A673 (cell line): ENCODE measurements at regions of chr6 and their contacts with region 1.

Region 1: GRCh38 chr6:44002593-44003344 is 124.5 kb downstream of the MRPL14 start:
- DNase-seq: peak; percentile 88
- H3K4me3 ChIP-seq: peak overlapping the region; percentile 39
- H3K27ac ChIP-seq: peak overlapping the region; percentile 92
- H3K4me1 ChIP-seq: peaks cover 83% of the 10 kb centered on the region
- H3K27me3 ChIP-seq: no peaks in the 10 kb centered on the region
- CTCF ChIP-seq: no peak; the same call in 1 of the 2 replicates

Region 2: DNA sequence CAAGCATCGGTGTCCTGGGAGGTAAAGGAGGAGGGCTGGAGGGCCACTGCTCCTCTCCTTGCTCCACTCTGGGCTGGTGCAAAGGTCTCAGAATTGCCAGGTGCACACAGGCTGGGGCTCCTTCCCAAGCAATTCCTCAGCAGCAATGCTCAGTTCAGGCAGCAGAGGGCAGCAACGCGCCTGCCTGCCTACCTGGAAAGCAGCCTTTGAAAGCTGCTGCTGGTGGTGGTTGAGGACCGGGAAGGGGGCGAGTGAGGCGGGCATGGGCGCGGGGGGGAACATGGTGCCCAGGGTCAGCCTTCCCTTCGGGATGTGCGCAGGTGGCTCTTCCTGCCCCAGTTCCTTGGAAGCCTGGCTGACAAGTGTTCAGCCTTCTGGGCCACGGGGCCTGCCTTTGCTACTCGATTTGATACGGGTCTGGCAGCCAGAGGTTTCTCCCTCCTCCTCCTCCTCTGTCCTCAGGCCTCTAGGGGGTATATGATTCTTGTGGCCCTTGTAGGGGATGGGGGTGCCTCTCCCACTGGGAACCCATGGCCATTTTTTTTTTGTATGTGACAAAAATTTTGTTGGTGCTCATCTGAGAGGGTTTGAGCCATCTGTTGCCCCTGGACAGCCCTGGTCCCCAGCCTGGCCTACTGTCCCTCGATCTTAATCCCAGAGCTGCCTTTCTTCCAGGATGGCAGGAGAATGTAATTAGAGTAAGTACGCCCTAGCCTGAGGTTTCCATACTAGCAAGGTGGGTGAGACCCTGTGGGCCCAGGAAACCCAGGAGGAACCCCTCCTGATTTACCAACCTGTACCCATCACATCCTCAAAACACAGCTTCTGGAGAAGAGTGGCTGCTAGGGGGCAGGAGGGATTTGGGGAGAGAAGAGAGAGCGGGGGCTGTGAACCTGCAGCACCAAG is 335.3 kb before region 1 on chr6:
- CTCF ChIA-PET with region 1: no interaction called
- POLR2A ChIA-PET with region 1: no interaction called
- intact Hi-C with region 1: loop called (anchors 2 kb)
- DNase-seq: peak; percentile 81
- H3K4me3 ChIP-seq: peak overlapping the region; percentile 21
- H3K27ac ChIP-seq: no peak overlapping the region
- H3K4me1 ChIP-seq: peaks cover 14% of the 10 kb centered on the region
- H3K27me3 ChIP-seq: no peaks in the 10 kb centered on the region
- CTCF ChIP-seq: peak; percentile 96

Region 3: DNA sequence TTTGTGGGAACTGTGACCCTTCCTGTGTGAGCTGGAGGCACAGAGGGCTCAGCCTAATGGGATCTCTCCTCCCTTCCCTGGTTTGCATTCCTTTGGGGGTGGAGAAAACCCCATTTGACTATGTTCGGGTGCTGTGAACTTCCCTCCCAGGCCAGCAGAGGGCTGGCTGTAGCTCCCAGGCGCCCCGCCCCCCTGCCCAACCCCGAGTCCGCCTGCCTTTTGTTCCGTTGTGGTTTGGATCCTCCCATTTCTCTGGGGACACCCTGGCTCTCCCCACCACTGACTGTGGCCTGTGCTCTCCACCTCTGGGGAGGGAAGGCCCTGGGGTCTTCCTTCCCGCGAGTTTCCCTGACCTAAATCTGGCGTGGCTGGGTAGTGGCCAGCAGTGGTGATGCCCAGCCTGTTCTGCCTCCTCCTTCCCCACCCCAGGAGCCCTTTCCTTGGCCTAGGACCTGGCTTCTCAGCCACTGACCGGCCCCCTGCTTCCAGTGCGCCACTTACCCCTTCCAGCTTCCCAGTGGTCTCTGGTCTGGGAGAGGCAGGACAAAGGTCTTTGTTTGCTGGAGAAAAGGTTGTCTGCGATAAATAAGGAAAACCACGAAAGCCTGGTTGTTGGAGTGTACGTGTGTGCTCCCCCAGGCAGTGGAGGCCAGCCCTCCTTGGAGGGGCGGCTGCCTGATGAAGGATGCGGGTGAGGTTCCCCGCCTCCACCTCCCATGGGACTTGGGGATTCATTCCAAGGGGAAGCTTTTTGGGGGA is 227.8 kb before region 1 on chr6:
- CTCF ChIA-PET with region 1: interaction called, 3 read pairs
- POLR2A ChIA-PET with region 1: no interaction called
- intact Hi-C with region 1: loop called (anchors 2 kb)
- DNase-seq: peak; percentile 85
- H3K4me3 ChIP-seq: peak overlapping the region; percentile 76
- H3K27ac ChIP-seq: peak overlapping the region; percentile 98
- H3K4me1 ChIP-seq: peaks cover 15% of the 10 kb centered on the region
- H3K27me3 ChIP-seq: no peaks in the 10 kb centered on the region
- CTCF ChIP-seq: peak; percentile 86

Region 4: GRCh38 chr6:43874267-43874666 is 128.5 kb before region 1 on chr6:
- CTCF ChIA-PET with region 1: no interaction called
- POLR2A ChIA-PET with region 1: no interaction called
- intact Hi-C with region 1: loop called (anchors 5 kb)
- DNase-seq: no peak
- H3K4me3 ChIP-seq: no peak overlapping the region
- H3K27ac ChIP-seq: no peak overlapping the region
- H3K4me1 ChIP-seq: peaks cover 28% of the 10 kb centered on the region
- H3K27me3 ChIP-seq: no peaks in the 10 kb centered on the region
- CTCF ChIP-seq: no peak

Region 5: GRCh38 chr6:43964659-43965570 is 37.9 kb before region 1 on chr6:
- CTCF ChIA-PET with region 1: no interaction called
- POLR2A ChIA-PET with region 1: no interaction called
- intact Hi-C with region 1: no loop called
- DNase-seq: no peak
- H3K4me3 ChIP-seq: no peak overlapping the region
- H3K27ac ChIP-seq: no peak overlapping the region
- H3K4me1 ChIP-seq: no peaks in the 10 kb centered on the region
- H3K27me3 ChIP-seq: no peaks in the 10 kb centered on the region
- CTCF ChIP-seq: no peak

Region 6: GRCh38 chr6:43986177-43986825 is 16.5 kb before region 1 on chr6:
- CTCF ChIA-PET with region 1: no interaction called
- POLR2A ChIA-PET with region 1: interaction called, 18 read pairs
- intact Hi-C with region 1: no loop called
- DNase-seq: no peak
- H3K4me3 ChIP-seq: no peak overlapping the region
- H3K27ac ChIP-seq: no peak overlapping the region
- H3K4me1 ChIP-seq: peaks cover 8% of the 10 kb centered on the region
- H3K27me3 ChIP-seq: no peaks in the 10 kb centered on the region
- CTCF ChIP-seq: no peak

Region 7: DNA sequence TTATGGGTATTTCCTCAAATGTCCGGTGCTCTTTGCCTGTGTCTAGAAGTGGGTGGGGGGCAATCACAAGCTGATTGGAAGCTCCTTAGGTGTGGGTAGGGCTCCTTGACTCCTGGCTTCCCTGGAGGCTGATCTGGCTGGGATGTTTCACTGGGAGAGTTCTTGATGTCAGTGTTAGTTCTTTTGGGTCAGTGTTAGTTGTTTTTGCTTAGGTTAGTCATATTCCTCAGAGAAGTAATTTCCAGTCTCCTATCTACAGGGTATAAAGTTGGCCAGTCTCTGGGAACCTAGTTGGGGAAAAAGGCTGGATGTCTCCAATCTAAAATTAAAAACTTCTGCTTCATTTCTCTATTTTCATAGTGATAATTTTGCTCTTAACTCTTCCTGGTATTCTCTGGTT is 408.4 kb after region 1 on chr6:
- CTCF ChIA-PET with region 1: no interaction called
- POLR2A ChIA-PET with region 1: no interaction called
- intact Hi-C with region 1: no loop called
- DNase-seq: no peak
- H3K4me3 ChIP-seq: no peak overlapping the region
- H3K27ac ChIP-seq: no peak overlapping the region
- H3K4me1 ChIP-seq: peaks cover 14% of the 10 kb centered on the region
- H3K27me3 ChIP-seq: no peaks in the 10 kb centered on the region
- CTCF ChIP-seq: no peak